GM10248 (cell line): ENCODE measurements at regions of chr6 and their contacts with region 1.

Region 1: DNA sequence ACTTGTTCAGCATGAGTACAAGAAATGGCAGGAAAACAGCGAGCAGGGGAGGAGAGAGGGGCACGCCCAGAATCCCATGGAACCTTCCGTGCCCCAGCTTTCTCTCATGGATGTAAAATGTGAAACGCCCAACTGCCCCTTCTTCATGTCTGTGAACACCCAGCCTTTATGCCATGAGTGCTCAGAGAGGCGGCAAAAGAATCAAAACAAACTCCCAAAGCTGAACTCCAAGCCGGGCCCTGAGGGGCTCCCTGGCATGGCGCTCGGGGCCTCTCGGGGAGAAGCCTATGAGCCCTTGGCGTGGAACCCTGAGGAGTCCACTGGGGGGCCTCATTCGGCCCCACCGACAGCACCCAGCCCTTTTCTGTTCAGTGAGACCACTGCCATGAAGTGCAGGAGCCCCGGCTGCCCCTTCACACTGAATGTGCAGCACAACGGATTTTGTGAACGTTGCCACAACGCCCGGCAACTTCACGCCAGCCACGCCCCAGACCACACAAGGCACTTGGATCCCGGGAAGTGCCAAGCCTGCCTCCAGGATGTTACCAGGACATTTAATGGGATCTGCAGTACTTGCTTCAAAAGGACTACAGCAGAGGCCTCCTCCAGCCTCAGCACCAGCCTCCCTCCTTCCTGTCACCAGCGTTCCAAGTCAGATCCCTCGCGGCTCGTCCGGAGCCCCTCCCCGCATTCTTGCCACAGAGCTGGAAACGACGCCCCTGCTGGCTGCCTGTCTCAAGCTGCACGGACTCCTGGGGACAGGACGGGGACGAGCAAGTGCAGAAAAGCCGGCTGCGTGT is 11.6 kb downstream of the TNFAIP3 start:
- DNase-seq: no peak
- CTCF ChIP-seq: no peak

Region 2: GRCh38 chr6:137894779-137895385 is 16.2 kb after region 1 on chr6:
- CTCF ChIA-PET with region 1: interaction called, 10 read pairs
- POLR2A ChIA-PET with region 1: interaction called, 6 read pairs
- DNase-seq: no peak
- CTCF ChIP-seq: no peak

Region 3: DNA sequence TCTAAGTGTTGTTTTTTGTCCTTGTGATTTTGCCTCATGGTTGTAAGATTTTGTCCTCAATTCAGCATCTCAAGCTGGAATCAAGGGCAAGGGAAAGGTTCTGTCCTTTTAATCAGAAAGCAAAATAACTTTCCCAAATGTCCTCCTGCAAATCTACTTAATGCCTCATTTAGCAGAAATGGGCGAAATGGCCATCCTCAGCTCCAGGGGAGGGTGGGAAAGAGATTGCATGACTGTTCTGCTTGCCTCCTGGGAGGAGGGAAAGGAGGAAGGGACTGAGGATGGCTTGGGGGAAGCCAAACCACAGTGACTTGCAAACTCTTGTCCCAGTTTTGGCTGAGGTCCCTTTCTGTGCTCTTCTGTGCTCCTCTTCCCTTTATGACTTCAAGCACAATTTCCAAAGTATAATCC is 31.7 kb after region 1 on chr6:
- CTCF ChIA-PET with region 1: interaction called, 14 read pairs
- POLR2A ChIA-PET with region 1: no interaction called
- DNase-seq: no peak
- CTCF ChIP-seq: no peak

Region 4: DNA sequence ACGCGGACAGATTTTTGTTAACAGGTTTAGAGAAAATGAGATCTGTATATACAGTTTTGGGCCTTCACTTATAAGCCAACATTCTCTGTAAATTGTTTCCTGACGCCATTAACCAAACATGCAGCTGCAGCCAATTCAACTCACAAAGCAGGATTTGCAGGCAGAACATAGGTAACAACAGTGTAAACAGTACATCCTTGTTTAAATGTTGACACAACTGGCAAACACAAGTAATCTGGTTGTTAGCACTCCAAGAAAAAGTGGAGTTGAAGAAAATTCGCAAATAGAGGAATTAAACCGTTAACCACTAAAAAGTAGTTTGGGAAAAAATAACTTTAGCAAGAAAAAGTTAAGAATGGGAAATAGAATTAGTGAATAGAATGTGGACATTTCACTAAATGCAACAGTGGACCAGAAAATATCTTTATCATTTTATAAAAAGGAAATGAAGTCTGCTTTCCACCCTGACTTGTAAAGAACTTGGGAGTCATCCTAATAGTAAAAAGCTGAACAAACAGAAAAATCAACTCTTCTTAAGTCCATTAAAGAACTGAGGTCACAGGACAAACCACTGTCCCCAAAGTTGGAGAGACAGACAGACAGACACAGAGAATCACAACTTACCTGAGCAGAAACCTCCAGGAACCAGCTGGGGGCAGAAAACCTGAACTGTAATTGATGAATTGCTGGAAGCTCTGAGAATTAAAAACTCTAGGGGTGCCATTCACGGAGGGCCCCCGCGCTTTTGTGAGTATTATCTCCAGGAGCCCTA is 509.1 kb after region 1 on chr6:
- CTCF ChIA-PET with region 1: no interaction called
- POLR2A ChIA-PET with region 1: no interaction called
- DNase-seq: no peak
- CTCF ChIP-seq: no peak